A673 (cell line): ENCODE measurements at regions of chr1 and their contacts with region 1.

Region 1: GRCh38 chr1:90133133-90133532 is 138.2 kb downstream of the ZNF326 start:
- DNase-seq: peak; percentile 93
- H3K4me3 ChIP-seq: no peak overlapping the region
- H3K27ac ChIP-seq: peak overlapping the region; percentile 15
- H3K4me1 ChIP-seq: peaks cover 48% of the 10 kb centered on the region
- H3K27me3 ChIP-seq: no peaks in the 10 kb centered on the region
- CTCF ChIP-seq: peak; percentile 86

Region 2: GRCh38 chr1:89908672-89909436 is 224.3 kb before region 1 on chr1:
- CTCF ChIA-PET with region 1: no interaction called
- POLR2A ChIA-PET with region 1: no interaction called
- intact Hi-C with region 1: no loop called
- DNase-seq: peak; percentile 97
- H3K4me3 ChIP-seq: peak overlapping the region; percentile 0
- H3K27ac ChIP-seq: peak overlapping the region; percentile 92
- H3K4me1 ChIP-seq: peaks cover 87% of the 10 kb centered on the region
- H3K27me3 ChIP-seq: no peaks in the 10 kb centered on the region
- CTCF ChIP-seq: no peak

Region 3: DNA sequence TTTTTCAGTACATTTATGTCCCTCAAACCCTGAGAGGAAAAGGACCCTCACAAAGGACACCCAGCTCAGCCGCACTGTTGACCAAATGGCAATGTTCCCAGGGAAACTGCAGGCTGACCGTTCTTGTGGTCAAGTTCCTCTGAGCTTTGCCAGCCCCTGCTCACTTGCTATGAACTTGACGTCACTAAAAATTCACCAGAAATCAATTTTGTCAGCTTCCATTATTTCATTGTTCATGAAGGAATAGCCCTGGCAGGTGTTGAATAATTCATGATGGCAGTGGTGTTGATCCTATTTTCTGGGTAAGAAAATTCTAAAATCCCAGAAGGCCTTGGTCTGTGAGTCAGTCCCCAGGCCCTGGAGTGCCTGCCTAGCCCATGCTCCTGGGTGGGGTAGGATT is 180.6 kb after region 1 on chr1:
- CTCF ChIA-PET with region 1: interaction called, 5 read pairs
- POLR2A ChIA-PET with region 1: no interaction called
- intact Hi-C with region 1: loop called (anchors 1 kb)
- DNase-seq: peak; percentile 57
- H3K4me3 ChIP-seq: no peak overlapping the region
- H3K27ac ChIP-seq: peak overlapping the region; percentile 66
- H3K4me1 ChIP-seq: peaks cover 62% of the 10 kb centered on the region
- H3K27me3 ChIP-seq: no peaks in the 10 kb centered on the region
- CTCF ChIP-seq: no peak

Region 4: GRCh38 chr1:90391126-90391525 is 258.0 kb after region 1 on chr1:
- CTCF ChIA-PET with region 1: no interaction called
- POLR2A ChIA-PET with region 1: no interaction called
- intact Hi-C with region 1: no loop called
- DNase-seq: peak; percentile 62
- H3K4me3 ChIP-seq: no peak overlapping the region
- H3K27ac ChIP-seq: no peak overlapping the region
- H3K4me1 ChIP-seq: no peaks in the 10 kb centered on the region
- H3K27me3 ChIP-seq: no peaks in the 10 kb centered on the region
- CTCF ChIP-seq: no peak

Region 5: GRCh38 chr1:90579212-90579802 is 446.2 kb after region 1 on chr1:
- CTCF ChIA-PET with region 1: no interaction called
- POLR2A ChIA-PET with region 1: no interaction called
- intact Hi-C with region 1: loop called (anchors 2 kb)
- DNase-seq: peak; percentile 80
- H3K4me3 ChIP-seq: no peak overlapping the region
- H3K27ac ChIP-seq: no peak overlapping the region
- H3K4me1 ChIP-seq: peaks cover 3% of the 10 kb centered on the region
- H3K27me3 ChIP-seq: no peaks in the 10 kb centered on the region
- CTCF ChIP-seq: peak; percentile 83

Region 6: DNA sequence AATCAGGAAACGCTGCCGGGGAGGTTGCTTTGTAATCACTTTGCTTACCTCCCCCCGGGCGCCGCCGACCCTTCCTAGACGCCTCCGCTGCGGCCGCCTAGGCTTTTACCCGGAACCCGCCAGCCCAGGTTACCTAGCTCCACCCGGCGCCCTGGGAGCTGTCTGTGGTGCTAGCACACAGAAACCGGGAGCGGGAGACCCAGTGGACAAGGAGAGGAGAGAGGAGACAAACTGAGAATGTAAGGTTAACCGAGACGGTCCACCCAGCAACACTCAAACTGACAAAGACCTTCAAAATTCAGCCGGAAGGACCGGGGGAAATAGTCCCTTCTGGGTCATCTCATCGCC is 574.2 kb after region 1 on chr1:
- CTCF ChIA-PET with region 1: interaction called, 4 read pairs
- POLR2A ChIA-PET with region 1: no interaction called
- intact Hi-C with region 1: loop called (anchors 5 kb)
- DNase-seq: peak; percentile 82
- H3K4me3 ChIP-seq: peak overlapping the region; percentile 50
- H3K27ac ChIP-seq: peak overlapping the region; percentile 91
- H3K4me1 ChIP-seq: peaks cover 55% of the 10 kb centered on the region
- H3K27me3 ChIP-seq: no peaks in the 10 kb centered on the region
- CTCF ChIP-seq: no peak

Region 7: GRCh38 chr1:91165033-91165654 is 1032.0 kb after region 1 on chr1:
- CTCF ChIA-PET with region 1: interaction called, 8 read pairs
- POLR2A ChIA-PET with region 1: no interaction called
- intact Hi-C with region 1: loop called (anchors 5 kb)
- DNase-seq: peak; percentile 83
- H3K4me3 ChIP-seq: no peak overlapping the region
- H3K27ac ChIP-seq: no peak overlapping the region
- H3K4me1 ChIP-seq: peaks cover 4% of the 10 kb centered on the region
- H3K27me3 ChIP-seq: no peaks in the 10 kb centered on the region
- CTCF ChIP-seq: peak; percentile 98